CD4-positive, alpha-beta T cell (primary cell): ENCODE measurements at regions of chr21 and their contacts with region 1.

Region 1: GRCh38 chr21:38861989-38862683 is 56.4 kb downstream of the ETS2 start:
- DNase-seq: peak in 1 of 14 experiments; percentile 6
- ATAC-seq: no peak
- H3K4me3 ChIP-seq: no peak overlapping the region
- H3K4me3 Mint-ChIP-seq: no peak overlapping the region
- H3K27ac ChIP-seq: no peak overlapping the region
- H3K27ac Mint-ChIP-seq: no peak overlapping the region
- H3K4me1 ChIP-seq: peaks cover 8% of the 10 kb centered on the region
- H3K4me1 Mint-ChIP-seq: no peaks in the 10 kb centered on the region
- H3K27me3 ChIP-seq: peaks cover 0 to 6% of the 10 kb centered on the region in 2 experiments
- H3K27me3 Mint-ChIP-seq: peaks cover 5% of the 10 kb centered on the region
- CTCF ChIP-seq: no peak

Region 2: GRCh38 chr21:39474611-39475010 is 612.5 kb after region 1 on chr21:
- CTCF ChIA-PET with region 1: no interaction called
- POLR2A ChIA-PET with region 1: no interaction called
- intact Hi-C with region 1: loop called in 1 of 2 experiments (anchors 5 kb)
- DNase-seq: no peak
- ATAC-seq: no peak
- H3K4me3 ChIP-seq: no peak overlapping the region
- H3K4me3 Mint-ChIP-seq: no peak overlapping the region
- H3K27ac ChIP-seq: no peak overlapping the region
- H3K27ac Mint-ChIP-seq: no peak overlapping the region
- H3K4me1 ChIP-seq: no peaks in the 10 kb centered on the region
- H3K4me1 Mint-ChIP-seq: no peaks in the 10 kb centered on the region
- H3K27me3 ChIP-seq: no peaks in the 10 kb centered on the region
- H3K27me3 Mint-ChIP-seq: no peaks in the 10 kb centered on the region
- CTCF ChIP-seq: no peak